H1 (cell line): ENCODE measurements at regions of chr12 and their contacts with region 1.

Region 1: GRCh38 chr12:69879041-69879960 is 54.3 kb downstream of the MYRFL start:
- DNase-seq: peak in 1 of 2 experiments; percentile 86
- H3K4me3 ChIP-seq: peak overlapping the region in 1 of 4 experiments; percentile 5; a peak in 1 of 8 replicates
- H3K27ac ChIP-seq: no peak overlapping the region
- H3K4me1 ChIP-seq: peaks cover 2 to 9% (median 3%) of the 10 kb centered on the region in 4 experiments; a peak in 4 of 7 replicates
- H3K27me3 ChIP-seq: 0 out of 7 replicates have a peak, but pooled peaks cover 0 to 2% (median 0%) of the 10 kb centered on the region in 4 experiments
- CTCF ChIP-seq: peak; percentile 79 to 86 (median 85)
- EP300 ChIP-seq: no peak
- POLR2A ChIP-seq: no peak
- RAD21 ChIP-seq: peak; percentile 98 to 99

Region 2: GRCh38 chr12:69570545-69571399 is 308.5 kb before region 1 on chr12:
- CTCF ChIA-PET with region 1: no interaction called
- POLR2A ChIA-PET with region 1: no interaction called
- DNase-seq: peak in 1 of 2 experiments; percentile 63
- H3K4me3 ChIP-seq: no peak overlapping the region
- H3K27ac ChIP-seq: no peak overlapping the region
- H3K4me1 ChIP-seq: no peaks in the 10 kb centered on the region
- H3K27me3 ChIP-seq: peaks cover 0 to 1% (median 0%) of the 10 kb centered on the region in 4 experiments; a peak in 1 of 7 replicates
- CTCF ChIP-seq: peak in 2 of 3 experiments; percentile 72 to 76; a peak in 3 of 4 replicates
- EP300 ChIP-seq: no peak
- POLR2A ChIP-seq: no peak
- RAD21 ChIP-seq: peak; percentile 79

Region 3: DNA sequence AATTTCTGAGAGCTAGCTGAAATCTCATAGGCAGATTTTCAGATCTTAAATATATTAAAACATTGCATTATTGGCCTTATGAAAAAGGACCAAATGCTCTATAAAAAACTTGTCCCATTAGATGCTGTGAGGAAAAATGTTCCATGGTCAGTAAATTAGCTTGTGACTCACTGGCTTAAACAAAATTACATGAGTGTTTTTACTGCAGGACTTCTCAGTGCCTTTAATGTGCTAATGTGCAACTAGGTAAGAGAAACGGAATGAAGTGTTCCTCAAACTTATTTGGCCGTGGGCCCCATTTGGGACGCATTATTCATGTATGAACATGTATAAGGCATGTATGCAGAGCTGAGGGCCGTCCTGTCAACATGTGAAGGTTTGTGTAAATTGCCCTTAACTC is 12.6 kb before region 1 on chr12:
- CTCF ChIA-PET with region 1: interaction called, 10 read pairs
- POLR2A ChIA-PET with region 1: no interaction called
- DNase-seq: no peak
- H3K4me3 ChIP-seq: no peak overlapping the region
- H3K27ac ChIP-seq: no peak overlapping the region
- H3K4me1 ChIP-seq: no peaks in the 10 kb centered on the region
- H3K27me3 ChIP-seq: no peaks in the 10 kb centered on the region
- CTCF ChIP-seq: no peak
- EP300 ChIP-seq: no peak
- POLR2A ChIP-seq: no peak
- RAD21 ChIP-seq: no peak

Region 4: GRCh38 chr12:69900720-69901131 is 21.4 kb after region 1 on chr12:
- CTCF ChIA-PET with region 1: interaction called, 29 read pairs
- POLR2A ChIA-PET with region 1: interaction called, 3 read pairs
- DNase-seq: peak in 1 of 2 experiments; percentile 88
- H3K4me3 ChIP-seq: no peak overlapping the region
- H3K27ac ChIP-seq: no peak overlapping the region
- H3K4me1 ChIP-seq: peaks cover 2 to 27% (median 18%) of the 10 kb centered on the region in 4 experiments; a peak in 6 of 7 replicates
- H3K27me3 ChIP-seq: no peaks in the 10 kb centered on the region
- CTCF ChIP-seq: peak; percentile 5 to 75 (median 69)
- EP300 ChIP-seq: peak in 1 of 2 experiments; percentile 53; a peak in 1 of 3 replicates
- POLR2A ChIP-seq: no peak
- RAD21 ChIP-seq: peak; percentile 92 to 95

Region 5: GRCh38 chr12:69908203-69908602 is 28.9 kb after region 1 on chr12:
- CTCF ChIA-PET with region 1: interaction called, 29 read pairs
- POLR2A ChIA-PET with region 1: no interaction called
- DNase-seq: no peak
- H3K4me3 ChIP-seq: no peak overlapping the region
- H3K27ac ChIP-seq: no peak overlapping the region
- H3K4me1 ChIP-seq: no peaks in the 10 kb centered on the region
- H3K27me3 ChIP-seq: no peaks in the 10 kb centered on the region
- CTCF ChIP-seq: no peak
- EP300 ChIP-seq: no peak
- POLR2A ChIP-seq: no peak
- RAD21 ChIP-seq: no peak

Region 6: GRCh38 chr12:69966409-69967207 is 87.3 kb after region 1 on chr12:
- CTCF ChIA-PET with region 1: no interaction called
- POLR2A ChIA-PET with region 1: no interaction called
- DNase-seq: no peak
- H3K4me3 ChIP-seq: no peak overlapping the region
- H3K27ac ChIP-seq: no peak overlapping the region
- H3K4me1 ChIP-seq: no peaks in the 10 kb centered on the region
- H3K27me3 ChIP-seq: no peaks in the 10 kb centered on the region
- CTCF ChIP-seq: no peak
- EP300 ChIP-seq: no peak
- POLR2A ChIP-seq: no peak
- RAD21 ChIP-seq: no peak

Region 7: GRCh38 chr12:69999565-69999964 is 120.3 kb after region 1 on chr12:
- CTCF ChIA-PET with region 1: interaction called, 13 read pairs
- POLR2A ChIA-PET with region 1: no interaction called
- DNase-seq: no peak
- H3K4me3 ChIP-seq: no peak overlapping the region
- H3K27ac ChIP-seq: no peak overlapping the region
- H3K4me1 ChIP-seq: no peaks in the 10 kb centered on the region; a peak in 1 of 7 replicates
- H3K27me3 ChIP-seq: no peaks in the 10 kb centered on the region
- CTCF ChIP-seq: no peak
- EP300 ChIP-seq: no peak
- POLR2A ChIP-seq: no peak
- RAD21 ChIP-seq: peak in 1 of 2 experiments; percentile 22; a peak in 1 of 4 replicates

Region 8: GRCh38 chr12:70196811-70197281 is 317.5 kb after region 1 on chr12:
- CTCF ChIA-PET with region 1: no interaction called
- POLR2A ChIA-PET with region 1: no interaction called
- DNase-seq: no peak
- H3K4me3 ChIP-seq: no peak overlapping the region
- H3K27ac ChIP-seq: no peak overlapping the region
- H3K4me1 ChIP-seq: no peaks in the 10 kb centered on the region
- H3K27me3 ChIP-seq: no peaks in the 10 kb centered on the region
- CTCF ChIP-seq: no peak
- EP300 ChIP-seq: no peak
- POLR2A ChIP-seq: no peak
- RAD21 ChIP-seq: no peak

Region 9: GRCh38 chr12:70576346-70577282 is 697.3 kb after region 1 on chr12:
- CTCF ChIA-PET with region 1: interaction called, 37 read pairs
- POLR2A ChIA-PET with region 1: interaction called, 3 read pairs
- DNase-seq: no peak
- H3K4me3 ChIP-seq: no peak overlapping the region
- H3K27ac ChIP-seq: no peak overlapping the region
- H3K4me1 ChIP-seq: no peaks in the 10 kb centered on the region
- H3K27me3 ChIP-seq: no peaks in the 10 kb centered on the region
- CTCF ChIP-seq: peak in 2 of 3 experiments; percentile 75 to 77; a peak in 3 of 4 replicates
- EP300 ChIP-seq: no peak
- POLR2A ChIP-seq: no peak
- RAD21 ChIP-seq: peak; percentile 97 to 99

Region 10: DNA sequence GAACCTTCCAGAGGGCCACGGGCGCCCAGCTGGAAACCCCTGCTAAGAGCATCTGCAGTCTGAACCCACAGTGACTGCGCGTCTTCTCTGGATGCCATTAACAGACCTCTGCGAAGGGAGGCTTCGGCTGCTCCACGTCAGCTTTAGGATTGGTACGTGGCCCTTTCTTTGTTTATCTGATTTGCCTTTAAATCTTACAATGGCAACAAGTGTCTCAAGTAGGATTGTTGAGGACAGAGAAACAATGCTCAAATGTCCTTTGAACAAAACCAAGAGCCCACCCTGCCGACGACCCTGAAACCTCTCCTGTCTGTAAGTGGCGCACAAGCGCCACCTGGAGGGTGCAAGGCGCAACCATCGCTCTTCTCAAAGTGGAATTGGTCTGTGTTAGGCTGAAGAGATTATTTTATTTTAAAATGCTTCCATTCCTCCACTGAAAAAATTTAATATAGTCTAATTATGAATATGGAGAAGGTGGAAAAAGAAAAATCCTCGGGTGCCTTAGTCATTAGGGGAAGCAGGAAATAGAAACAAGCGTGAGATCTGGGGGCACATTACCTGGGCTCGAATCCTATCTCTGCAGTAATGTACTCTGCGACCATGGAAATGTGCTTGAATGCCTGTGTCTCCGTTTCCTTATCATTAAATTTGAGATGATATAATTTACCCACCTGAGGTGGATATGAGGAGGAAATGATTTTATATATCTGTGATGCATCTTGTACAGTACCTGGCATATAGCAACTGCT is 840.5 kb after region 1 on chr12:
- CTCF ChIA-PET with region 1: interaction called, 19 read pairs
- POLR2A ChIA-PET with region 1: no interaction called
- DNase-seq: peak; percentile 23 to 73
- H3K4me3 ChIP-seq: peak overlapping the region in 1 of 4 experiments; percentile 12; a peak in 2 of 8 replicates
- H3K27ac ChIP-seq: no peak overlapping the region
- H3K4me1 ChIP-seq: peaks cover 0 to 10% (median 1%) of the 10 kb centered on the region in 4 experiments; a peak in 2 of 7 replicates
- H3K27me3 ChIP-seq: no peaks in the 10 kb centered on the region
- CTCF ChIP-seq: peak; percentile 81 to 93 (median 83)
- EP300 ChIP-seq: no peak
- POLR2A ChIP-seq: no peak
- RAD21 ChIP-seq: peak; percentile 94